Head of caudate nucleus (tissue), 42 donors: ENCODE measurements at regions of chr2 and their contacts with region 1.

Region 1: GRCh38 chr2:181715033-181715630 is 34.8 kb upstream of the NEUROD1 start:
- DNase-seq: peak; percentile 19 to 91 (median 73)

Region 2: DNA sequence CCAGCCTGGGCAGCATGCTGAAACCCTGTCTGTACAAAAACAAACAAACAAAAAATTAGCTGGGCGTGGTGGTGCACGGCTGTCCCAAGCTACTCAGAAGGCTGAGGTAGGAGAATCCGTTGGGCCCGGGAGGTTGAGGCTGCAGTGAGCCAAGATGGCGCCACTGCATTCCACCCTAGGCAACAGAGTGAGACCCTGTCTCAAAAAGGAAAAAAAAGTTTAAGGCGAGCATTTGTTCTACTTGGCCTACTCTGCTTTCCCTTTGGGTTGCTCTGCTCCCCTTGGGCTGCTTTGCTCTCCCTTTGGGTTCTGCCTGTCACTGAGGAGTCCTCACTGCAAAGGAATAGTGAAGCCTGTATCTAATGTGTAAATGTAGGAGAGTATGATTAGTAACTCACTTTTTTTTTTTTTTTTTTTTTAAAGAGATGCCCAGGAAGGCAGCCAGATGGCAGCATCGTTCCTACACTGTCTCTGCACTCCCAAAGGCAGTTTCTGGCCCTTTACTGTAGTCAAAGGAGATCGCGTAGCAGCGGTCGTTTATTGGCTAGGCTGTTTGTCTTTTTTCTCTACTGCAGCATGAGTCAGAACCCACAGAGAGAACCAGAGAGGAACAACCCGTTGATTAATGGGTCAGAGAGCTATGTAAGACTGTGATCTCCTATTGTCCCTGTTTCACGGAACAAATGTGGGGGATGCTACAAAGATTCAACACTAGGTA is 1589.7 kb before region 1 on chr2:
- intact Hi-C with region 1: loop called (anchors 10 kb)
- DNase-seq: peak; percentile 35 to 89 (median 68)

Region 3: DNA sequence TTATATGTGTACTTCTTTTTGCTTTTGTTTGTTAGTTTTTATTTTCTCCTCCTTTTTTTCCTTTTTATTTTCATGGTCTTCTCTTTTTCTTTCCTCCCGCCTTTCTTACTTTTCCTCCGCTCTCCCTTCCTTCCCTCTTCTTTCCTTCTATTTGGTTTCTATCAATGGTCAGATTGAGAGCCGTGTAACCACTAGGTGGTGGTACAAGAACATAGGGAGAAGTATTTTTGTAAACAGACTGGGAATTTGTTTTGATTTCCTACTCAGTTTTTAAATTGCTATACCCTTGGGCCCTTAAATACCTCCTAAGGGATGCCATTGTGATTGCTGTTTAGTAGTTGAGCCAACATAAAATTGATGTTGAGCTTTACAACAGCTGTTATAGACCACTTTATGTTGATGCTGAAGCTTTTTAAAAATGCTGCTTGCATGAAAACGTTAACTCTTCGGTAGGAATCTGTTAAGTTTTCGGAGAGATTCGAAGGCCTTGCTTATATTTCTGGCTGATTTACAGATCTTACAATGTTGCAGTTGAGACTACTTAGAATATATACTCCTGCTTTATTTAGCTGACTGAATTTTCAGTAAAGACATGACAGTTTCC is 610.5 kb before region 1 on chr2:
- intact Hi-C with region 1: loop called (anchors 10 kb)
- DNase-seq: peak in 8 of 42 donors; percentile 3 to 40 (median 17)

Region 4: DNA sequence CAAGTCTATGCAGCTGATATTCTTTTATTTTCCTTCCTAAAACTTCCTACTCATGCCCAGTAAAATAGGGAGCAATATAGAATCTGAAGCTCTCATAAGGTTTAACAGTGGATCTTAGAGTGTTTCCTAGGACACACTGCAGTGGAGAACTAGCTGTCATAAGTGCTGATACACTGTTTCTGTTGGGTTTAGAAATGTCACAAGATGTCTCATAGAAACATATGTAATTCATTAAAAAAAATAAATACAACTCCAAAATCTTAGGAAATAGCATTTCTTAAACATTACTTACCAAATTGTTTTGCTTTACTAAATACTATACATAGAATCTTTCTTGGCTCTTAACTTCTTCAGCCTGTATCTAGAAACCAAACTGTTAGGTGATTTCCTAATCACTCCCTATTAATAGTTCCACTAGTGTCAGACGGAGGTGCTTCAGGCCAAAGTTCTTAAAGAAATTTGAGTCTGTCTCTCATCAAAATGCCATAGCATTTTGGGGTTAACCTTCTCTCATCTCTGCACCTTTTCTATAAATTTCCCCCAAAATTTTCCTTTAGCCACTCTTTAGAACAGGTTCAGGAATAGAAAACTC is 151.9 kb before region 1 on chr2:
- intact Hi-C with region 1: no loop called
- DNase-seq: no peak

Region 5: DNA sequence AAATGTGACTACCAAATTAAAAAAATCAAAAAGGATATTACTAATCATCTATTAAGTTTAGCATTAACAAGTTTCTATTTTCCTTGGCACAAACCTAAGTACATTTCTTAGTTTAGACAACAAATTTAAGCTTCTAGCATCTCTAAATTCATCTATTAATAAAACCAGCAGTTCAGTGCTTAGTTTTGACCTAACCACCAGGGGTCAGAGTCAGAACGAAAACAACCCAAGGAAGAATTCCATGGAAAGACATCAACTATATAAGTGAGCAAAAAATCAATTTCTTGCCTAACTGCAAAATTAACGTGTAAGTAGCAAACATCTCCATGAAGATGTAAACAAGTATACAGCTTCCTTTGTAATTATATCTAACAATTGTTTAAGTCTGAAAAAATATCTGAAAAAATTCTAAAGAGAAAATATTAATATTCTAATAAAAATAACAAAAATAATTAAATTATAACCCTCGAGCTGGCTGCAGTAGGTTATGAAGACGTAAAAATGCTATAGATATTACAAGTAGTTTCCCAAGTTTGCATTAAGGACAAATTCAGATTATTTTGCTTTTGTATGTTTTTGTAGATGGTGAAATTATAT is 141.9 kb before region 1 on chr2:
- intact Hi-C with region 1: loop called (anchors 10 kb)
- DNase-seq: peak in 1 of 42 donors; percentile 17